Mammary epithelial cell (primary cell): ENCODE measurements at regions of chr2 and their contacts with region 1.

Region 1: GRCh38 chr2:66574701-66575624 is 140.0 kb downstream of the MEIS1 start:
- DNase-seq: peak; percentile 66
- H3K4me3 ChIP-seq: peak overlapping the region; percentile 54 to 80 (median 55)
- H3K27ac ChIP-seq: no peak overlapping the region
- H3K4me1 ChIP-seq: peaks cover 23% of the 10 kb centered on the region
- H3K27me3 ChIP-seq: peaks cover 25% of the 10 kb centered on the region
- CTCF ChIP-seq: peak; percentile 44 to 67

Region 2: DNA sequence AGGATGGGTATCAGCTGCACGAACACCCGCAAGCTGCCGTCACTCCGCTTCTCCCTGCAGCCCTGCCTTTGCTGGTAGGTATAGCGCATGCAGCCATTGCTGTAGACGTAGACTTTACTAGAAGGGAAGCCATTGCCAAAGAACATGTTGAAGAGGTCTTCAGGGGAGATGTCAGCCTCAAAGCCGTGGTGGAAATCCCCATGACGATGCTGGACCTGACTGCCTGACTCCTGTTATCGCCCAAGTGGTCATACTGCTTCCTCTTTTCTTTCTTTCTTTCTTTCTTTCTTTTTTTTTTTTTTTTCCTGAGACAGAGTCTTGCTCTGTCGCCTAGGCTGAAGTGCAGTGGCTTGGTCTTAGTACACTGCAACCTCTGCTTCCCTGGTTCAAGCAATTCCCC is 1073.9 kb before region 1 on chr2:
- CTCF ChIA-PET with region 1: no interaction called
- dilution Hi-C with region 1: no loop called
- in situ Hi-C with region 1: no loop called
- intact Hi-C with region 1: no loop called
- DNase-seq: no peak
- H3K4me3 ChIP-seq: no peak overlapping the region
- H3K27ac ChIP-seq: no peak overlapping the region
- H3K4me1 ChIP-seq: peaks cover 11% of the 10 kb centered on the region
- H3K27me3 ChIP-seq: no peaks in the 10 kb centered on the region
- CTCF ChIP-seq: no peak

Region 3: DNA sequence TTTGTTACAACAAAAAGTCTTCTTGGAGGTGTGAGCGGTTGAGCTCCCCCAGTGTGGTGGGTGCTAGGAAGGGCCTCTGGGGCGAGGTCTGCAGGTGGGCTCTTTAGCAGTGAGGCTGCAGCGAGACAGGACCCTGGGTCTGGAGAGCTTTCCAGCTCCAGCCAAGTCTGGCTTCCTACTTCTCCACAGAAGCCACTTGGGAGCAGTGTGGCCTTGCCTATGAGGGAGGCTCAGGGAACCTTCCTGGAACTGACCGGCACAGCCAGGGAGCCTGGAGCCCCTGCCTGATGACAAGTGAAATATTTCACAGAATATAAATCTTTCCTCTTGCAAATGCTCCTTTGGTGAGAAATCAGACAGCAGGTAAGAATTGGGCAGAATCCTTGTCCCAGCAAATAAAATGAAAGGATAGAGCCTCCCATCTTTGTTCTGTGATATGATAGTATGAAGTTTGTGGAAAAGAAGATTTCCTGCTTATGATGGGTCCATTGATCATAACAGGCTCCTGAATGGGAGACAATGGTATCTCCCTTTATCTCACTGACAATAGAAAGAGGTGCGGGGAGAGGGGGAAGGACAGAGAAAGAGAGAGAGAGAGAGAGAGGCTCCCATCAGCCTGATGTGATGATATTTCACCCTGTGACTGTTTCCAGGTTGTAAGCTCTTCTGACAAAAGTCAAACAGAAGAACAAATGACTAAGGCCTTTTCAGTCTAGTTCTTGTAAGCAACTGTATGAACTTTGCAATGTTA is 852.8 kb before region 1 on chr2:
- CTCF ChIA-PET with region 1: interaction called, 5 read pairs
- dilution Hi-C with region 1: no loop called
- in situ Hi-C with region 1: no loop called
- intact Hi-C with region 1: loop called (anchors 2 kb)
- DNase-seq: peak; percentile 9
- H3K4me3 ChIP-seq: no peak overlapping the region
- H3K27ac ChIP-seq: no peak overlapping the region
- H3K4me1 ChIP-seq: no peaks in the 10 kb centered on the region
- H3K27me3 ChIP-seq: peaks cover 4% of the 10 kb centered on the region
- CTCF ChIP-seq: peak in 1 of 2 donors; percentile 62

Region 4: GRCh38 chr2:66346231-66346664 is 228.7 kb before region 1 on chr2:
- CTCF ChIA-PET with region 1: no interaction called
- dilution Hi-C with region 1: no loop called
- in situ Hi-C with region 1: no loop called
- intact Hi-C with region 1: no loop called
- DNase-seq: no peak
- H3K4me3 ChIP-seq: no peak overlapping the region
- H3K27ac ChIP-seq: no peak overlapping the region
- H3K4me1 ChIP-seq: no peaks in the 10 kb centered on the region
- H3K27me3 ChIP-seq: no peaks in the 10 kb centered on the region
- CTCF ChIP-seq: no peak

Region 5: GRCh38 chr2:66429071-66429477 is 145.9 kb before region 1 on chr2:
- CTCF ChIA-PET with region 1: no interaction called
- dilution Hi-C with region 1: no loop called
- in situ Hi-C with region 1: loop called (anchors 5 to 10 kb)
- intact Hi-C with region 1: loop called (anchors 1 kb)
- DNase-seq: peak; percentile 41
- H3K4me3 ChIP-seq: no peak overlapping the region
- H3K27ac ChIP-seq: no peak overlapping the region
- H3K4me1 ChIP-seq: peaks cover 4% of the 10 kb centered on the region
- H3K27me3 ChIP-seq: peaks cover 23% of the 10 kb centered on the region
- CTCF ChIP-seq: peak; percentile 93 to 95

Region 6: DNA sequence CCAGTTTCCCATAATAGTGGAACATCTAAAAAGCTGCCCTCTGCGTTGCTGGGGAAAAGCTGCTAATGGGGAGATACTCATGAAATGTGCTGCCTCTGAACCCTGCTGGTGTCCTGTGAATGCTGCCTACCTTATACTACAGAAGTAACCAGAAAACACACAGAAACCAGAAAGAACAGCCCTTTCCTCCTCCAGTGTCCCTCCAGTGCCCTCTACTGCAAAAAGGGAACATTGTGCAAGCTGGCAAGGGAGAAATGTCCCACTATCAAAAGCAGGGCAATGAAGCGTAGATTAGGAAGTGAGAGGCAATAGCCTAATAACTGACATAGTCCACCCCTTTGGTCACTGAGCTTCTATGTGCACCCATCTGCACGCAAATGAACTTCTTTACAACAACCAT is 659.5 kb after region 1 on chr2:
- CTCF ChIA-PET with region 1: no interaction called
- dilution Hi-C with region 1: no loop called
- in situ Hi-C with region 1: no loop called
- intact Hi-C with region 1: loop called (anchors 1 kb)
- DNase-seq: peak; percentile 17
- H3K4me3 ChIP-seq: no peak overlapping the region
- H3K27ac ChIP-seq: no peak overlapping the region
- H3K4me1 ChIP-seq: no peaks in the 10 kb centered on the region
- H3K27me3 ChIP-seq: no peaks in the 10 kb centered on the region
- CTCF ChIP-seq: peak in 1 of 2 donors; percentile 53

Region 7: DNA sequence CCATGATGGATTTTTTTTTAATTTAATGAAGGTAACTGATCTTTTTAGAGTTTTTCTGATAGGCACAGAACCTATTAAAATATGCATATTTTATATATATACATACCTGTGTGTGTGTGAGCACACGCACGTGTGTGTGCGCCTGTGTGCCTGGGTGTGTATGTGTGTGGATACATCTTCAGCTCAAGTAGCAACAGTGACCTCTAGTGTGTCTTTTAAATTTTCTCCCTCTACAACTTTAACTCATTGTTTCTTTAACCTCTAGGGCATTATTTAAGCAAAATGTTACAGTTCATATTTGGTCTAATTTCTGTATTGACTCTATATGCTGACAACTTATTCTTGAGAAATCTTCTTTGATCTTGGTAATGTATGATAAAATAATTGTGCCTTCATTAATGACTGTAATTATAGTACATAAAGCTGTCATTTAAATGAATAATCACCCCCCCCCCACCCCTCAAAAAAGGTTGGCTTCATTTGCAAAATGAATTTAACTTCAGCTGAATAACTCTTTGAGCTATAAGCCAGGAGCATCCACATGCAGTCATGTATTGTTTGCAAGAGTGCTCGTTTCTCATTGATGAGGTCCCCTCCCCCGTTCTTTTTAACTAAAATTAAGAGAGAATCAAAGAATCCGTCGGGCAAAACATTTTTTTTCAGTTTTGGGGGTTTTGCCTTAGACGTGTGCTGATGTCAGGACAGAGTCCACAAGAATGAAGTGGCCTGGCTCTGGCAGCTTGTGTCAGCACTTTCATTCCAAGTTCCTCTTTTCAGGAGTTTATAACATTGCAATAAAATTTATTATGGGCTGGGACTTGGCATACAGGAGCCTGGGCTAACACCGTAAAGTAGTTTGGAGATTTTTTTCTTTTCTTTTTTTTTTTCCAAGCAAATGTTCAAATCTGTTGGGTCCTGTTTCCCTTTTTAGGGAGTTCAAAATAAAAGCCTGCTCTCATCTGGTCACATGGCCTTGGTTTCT is 902.1 kb after region 1 on chr2:
- CTCF ChIA-PET with region 1: no interaction called
- dilution Hi-C with region 1: no loop called
- in situ Hi-C with region 1: no loop called
- intact Hi-C with region 1: loop called (anchors 2 kb)
- DNase-seq: peak; percentile 41
- H3K4me3 ChIP-seq: no peak overlapping the region
- H3K27ac ChIP-seq: no peak overlapping the region
- H3K4me1 ChIP-seq: no peaks in the 10 kb centered on the region
- H3K27me3 ChIP-seq: no peaks in the 10 kb centered on the region
- CTCF ChIP-seq: peak; percentile 52 to 72

Region 8: DNA sequence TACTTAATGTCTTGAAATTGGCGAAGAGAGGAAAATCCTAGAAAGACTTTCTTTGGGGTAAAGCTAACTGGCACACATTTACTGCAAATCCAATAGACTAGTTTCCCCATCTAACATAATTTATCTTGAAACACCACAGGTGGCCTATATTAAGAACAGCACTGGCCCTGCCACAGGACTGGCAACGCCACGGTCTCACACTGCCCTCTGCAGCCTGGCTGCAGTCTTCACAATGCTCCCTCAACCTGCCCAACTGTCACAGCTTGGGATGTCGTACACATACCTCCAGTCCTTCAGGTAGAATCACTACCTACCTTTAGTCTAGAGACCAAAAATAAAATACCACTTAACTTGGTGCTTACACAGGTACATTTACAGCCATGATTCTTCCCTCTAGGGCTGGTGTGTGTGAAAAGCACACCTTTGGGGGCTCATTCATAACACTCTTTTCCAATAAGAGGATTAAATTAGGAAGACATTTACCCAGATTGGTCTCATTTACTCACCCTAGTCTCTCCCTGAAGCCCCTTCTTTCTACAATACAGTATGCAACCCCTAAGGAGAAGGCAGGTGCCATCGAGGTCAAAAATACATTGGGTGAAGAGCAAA is 1265.6 kb after region 1 on chr2:
- CTCF ChIA-PET with region 1: no interaction called
- dilution Hi-C with region 1: no loop called
- in situ Hi-C with region 1: no loop called
- intact Hi-C with region 1: loop called (anchors 5 kb)
- DNase-seq: peak; percentile 56
- H3K4me3 ChIP-seq: no peak overlapping the region
- H3K27ac ChIP-seq: no peak overlapping the region
- H3K4me1 ChIP-seq: no peaks in the 10 kb centered on the region
- H3K27me3 ChIP-seq: no peaks in the 10 kb centered on the region
- CTCF ChIP-seq: peak; percentile 93 to 95